K562 (cell line): ENCODE measurements at regions of chr11 and their contacts with region 1.

Region 1: GRCh38 chr11:14727215-14727614 is 83.6 kb downstream of the PDE3B start:
- DNase-seq: no peak
- ATAC-seq: no peak
- H3K4me3 ChIP-seq: no peak overlapping the region
- H3K27ac ChIP-seq: no peak overlapping the region
- H3K4me1 ChIP-seq: no peaks in the 10 kb centered on the region
- H3K27me3 ChIP-seq: no peaks in the 10 kb centered on the region
- CTCF ChIP-seq: no peak
- EP300 ChIP-seq: no peak
- POLR2A ChIP-seq: no peak
- RAD21 ChIP-seq: no peak

Region 2: GRCh38 chr11:14619603-14620531 is 107.3 kb before region 1 on chr11:
- CTCF ChIA-PET with region 1: no interaction called
- POLR2A ChIA-PET with region 1: no interaction called
- in situ Hi-C with region 1: no loop called
- intact Hi-C with region 1: no loop called
- DNase-seq: no peak
- ATAC-seq: no peak
- H3K4me3 ChIP-seq: no peak overlapping the region
- H3K27ac ChIP-seq: no peak overlapping the region
- H3K4me1 ChIP-seq: no peaks in the 10 kb centered on the region
- H3K27me3 ChIP-seq: no peaks in the 10 kb centered on the region
- CTCF ChIP-seq: no peak
- EP300 ChIP-seq: no peak
- POLR2A ChIP-seq: no peak
- RAD21 ChIP-seq: no peak

Region 3: GRCh38 chr11:14687943-14688627 is 39.1 kb before region 1 on chr11:
- CTCF ChIA-PET with region 1: no interaction called
- POLR2A ChIA-PET with region 1: no interaction called
- in situ Hi-C with region 1: loop called (anchors 5 kb)
- intact Hi-C with region 1: no loop called
- DNase-seq: no peak
- ATAC-seq: no peak
- H3K4me3 ChIP-seq: no peak overlapping the region
- H3K27ac ChIP-seq: no peak overlapping the region
- H3K4me1 ChIP-seq: peaks cover 0 to 8% of the 10 kb centered on the region in 2 experiments; a peak in 1 of 5 replicates
- H3K27me3 ChIP-seq: no peaks in the 10 kb centered on the region
- CTCF ChIP-seq: no peak
- EP300 ChIP-seq: no peak
- POLR2A ChIP-seq: no peak
- RAD21 ChIP-seq: no peak